MCF 10A (cell line): ENCODE measurements at regions of chr11 and their contacts with region 1.

Region 1: GRCh38 chr11:26753723-26754504 is 32.1 kb upstream of the SLC5A12 start:
- DNase-seq: peak; percentile 75
- H3K4me3 Mint-ChIP-seq: no peak overlapping the region
- H3K27ac Mint-ChIP-seq: no peak overlapping the region
- H3K4me1 Mint-ChIP-seq: no peaks in the 10 kb centered on the region
- H3K27me3 Mint-ChIP-seq: no peaks in the 10 kb centered on the region
- CTCF ChIP-seq: peak; percentile 84

Region 2: DNA sequence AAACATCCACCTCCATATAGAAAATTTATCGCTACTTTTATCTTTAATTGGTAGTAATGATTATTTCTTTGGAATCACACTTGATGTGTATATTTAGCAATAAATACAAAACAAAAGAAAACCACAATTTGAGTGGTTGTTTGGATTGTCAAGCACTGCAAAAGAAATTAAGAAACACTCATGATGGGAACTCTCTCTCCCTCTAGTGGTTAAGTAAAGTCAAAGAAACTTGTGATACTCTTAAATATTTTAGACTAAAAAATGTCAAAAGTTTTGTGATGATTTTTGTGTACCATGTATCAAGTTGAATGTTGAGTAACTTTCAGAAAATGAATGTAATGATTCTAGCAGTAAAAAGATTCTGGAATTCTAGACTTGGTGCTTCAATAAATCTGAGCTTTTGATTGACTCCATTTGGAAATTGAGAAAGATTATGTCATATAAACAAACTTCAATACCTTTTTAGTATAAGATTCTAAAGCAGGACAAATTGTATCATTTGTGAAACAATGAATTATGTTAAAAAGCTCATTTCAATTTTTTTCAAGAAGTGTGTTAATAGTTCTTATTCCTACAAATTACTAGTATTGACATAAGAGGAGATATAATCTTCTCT is 202.6 kb before region 1 on chr11:
- CTCF ChIA-PET with region 1: no interaction called
- POLR2A ChIA-PET with region 1: no interaction called
- intact Hi-C with region 1: no loop called
- DNase-seq: no peak
- H3K4me3 Mint-ChIP-seq: no peak overlapping the region
- H3K27ac Mint-ChIP-seq: no peak overlapping the region
- H3K4me1 Mint-ChIP-seq: no peaks in the 10 kb centered on the region
- H3K27me3 Mint-ChIP-seq: peaks cover 28% of the 10 kb centered on the region
- CTCF ChIP-seq: peak; percentile 24

Region 3: GRCh38 chr11:26947379-26947844 is 193.5 kb after region 1 on chr11:
- CTCF ChIA-PET with region 1: no interaction called
- POLR2A ChIA-PET with region 1: no interaction called
- intact Hi-C with region 1: loop called (anchors 10 kb)
- DNase-seq: peak; percentile 94
- H3K4me3 Mint-ChIP-seq: no peak overlapping the region
- H3K27ac Mint-ChIP-seq: peak overlapping the region; percentile 81
- H3K4me1 Mint-ChIP-seq: peaks cover 51% of the 10 kb centered on the region
- H3K27me3 Mint-ChIP-seq: no peaks in the 10 kb centered on the region
- CTCF ChIP-seq: no peak

Region 4: DNA sequence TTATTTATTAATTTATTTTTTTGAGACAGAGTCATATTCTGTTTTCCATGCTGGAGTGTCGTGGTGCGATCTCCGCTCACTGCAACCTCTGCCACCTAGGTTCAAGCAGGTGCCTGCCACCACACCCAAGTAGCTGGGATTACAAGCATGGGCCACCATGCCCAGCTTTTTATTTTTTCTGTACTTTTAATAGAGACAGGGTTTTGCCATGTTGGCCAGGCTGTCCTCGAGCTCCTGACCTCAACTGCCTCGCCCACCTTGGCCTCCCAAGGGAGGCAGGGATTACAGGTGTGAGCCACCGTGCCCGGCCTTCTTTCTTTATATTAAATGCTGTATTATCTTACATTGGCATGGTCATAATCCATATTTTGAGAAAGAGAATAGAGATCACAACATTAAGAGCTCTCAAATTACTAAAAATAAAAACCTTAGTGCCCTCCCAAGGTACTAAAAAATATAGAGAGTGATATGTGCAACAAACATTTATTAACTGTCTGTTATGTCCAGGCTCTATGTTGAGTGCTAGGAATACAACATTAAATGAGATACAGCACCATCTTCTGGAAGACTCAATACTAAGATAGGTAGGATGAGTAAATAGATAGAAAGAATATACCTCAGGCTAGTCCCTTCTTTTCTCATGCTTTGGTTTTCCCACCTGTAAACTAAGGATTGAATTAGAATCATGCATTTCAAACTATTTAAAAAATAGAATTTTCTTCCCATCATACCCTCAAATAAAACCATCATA is 370.8 kb after region 1 on chr11:
- CTCF ChIA-PET with region 1: interaction called, 10 read pairs
- POLR2A ChIA-PET with region 1: interaction called, 3 read pairs
- intact Hi-C with region 1: loop called (anchors 1 kb)
- DNase-seq: peak; percentile 45
- H3K4me3 Mint-ChIP-seq: no peak overlapping the region
- H3K27ac Mint-ChIP-seq: no peak overlapping the region
- H3K4me1 Mint-ChIP-seq: peaks cover 5% of the 10 kb centered on the region
- H3K27me3 Mint-ChIP-seq: no peaks in the 10 kb centered on the region
- CTCF ChIP-seq: peak; percentile 28